ENCODE measurements at regions of chr1 and their contacts with region 1.

Region 1: DNA sequence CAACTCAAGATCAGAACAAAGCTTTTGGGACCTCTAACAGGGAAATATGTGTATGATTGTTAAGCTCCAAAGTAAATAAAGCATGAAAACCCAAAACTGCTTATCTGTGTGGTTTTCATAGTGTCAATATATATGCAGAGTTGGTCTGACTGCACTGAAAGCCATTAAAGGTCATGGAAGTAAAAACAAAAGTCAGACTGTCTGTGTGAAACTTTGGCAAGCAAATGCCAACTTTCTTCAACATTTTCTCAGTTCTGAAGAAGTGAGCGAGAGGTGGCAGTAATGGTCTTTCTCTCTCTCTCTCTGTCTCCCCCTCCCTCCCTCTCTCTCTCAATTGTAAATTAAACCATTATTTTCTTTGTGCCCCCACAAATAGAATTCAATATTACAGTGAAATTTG is 100.1 kb upstream of the S1PR1 start:
- DNase-seq: peak; percentile 79
- H3K4me3 Mint-ChIP-seq: peak overlapping the region; percentile 67
- H3K27ac Mint-ChIP-seq: peak overlapping the region; percentile 80
- H3K4me1 Mint-ChIP-seq: peaks cover 65% of the 10 kb centered on the region
- H3K27me3 Mint-ChIP-seq: peaks cover 1% of the 10 kb centered on the region

Region 2: GRCh38 chr1:100928128-100928527 is 208.6 kb before region 1 on chr1:
- intact Hi-C with region 1: loop called (anchors 2 kb)
- DNase-seq: peak; percentile 66
- H3K4me3 Mint-ChIP-seq: no peak overlapping the region
- H3K27ac Mint-ChIP-seq: no peak overlapping the region
- H3K4me1 Mint-ChIP-seq: peaks cover 44% of the 10 kb centered on the region
- H3K27me3 Mint-ChIP-seq: no peaks in the 10 kb centered on the region

Region 3: GRCh38 chr1:101025657-101026504 is 110.9 kb before region 1 on chr1 and contains the start of gene DPH5:
- intact Hi-C with region 1: loop called (anchors 2 kb)
- DNase-seq: peak; percentile 97
- H3K4me3 Mint-ChIP-seq: peak within 1 kb of the TSS; percentile 100
- H3K27ac Mint-ChIP-seq: peak within 1 kb of the TSS; percentile 98
- H3K4me1 Mint-ChIP-seq: peaks cover 42% of the 10 kb centered on the region
- H3K27me3 Mint-ChIP-seq: no peaks in the 10 kb centered on the region
- total RNA-seq, gene DPH5: 37.5 and 41.0 TPM in 2 replicates

Region 4: DNA sequence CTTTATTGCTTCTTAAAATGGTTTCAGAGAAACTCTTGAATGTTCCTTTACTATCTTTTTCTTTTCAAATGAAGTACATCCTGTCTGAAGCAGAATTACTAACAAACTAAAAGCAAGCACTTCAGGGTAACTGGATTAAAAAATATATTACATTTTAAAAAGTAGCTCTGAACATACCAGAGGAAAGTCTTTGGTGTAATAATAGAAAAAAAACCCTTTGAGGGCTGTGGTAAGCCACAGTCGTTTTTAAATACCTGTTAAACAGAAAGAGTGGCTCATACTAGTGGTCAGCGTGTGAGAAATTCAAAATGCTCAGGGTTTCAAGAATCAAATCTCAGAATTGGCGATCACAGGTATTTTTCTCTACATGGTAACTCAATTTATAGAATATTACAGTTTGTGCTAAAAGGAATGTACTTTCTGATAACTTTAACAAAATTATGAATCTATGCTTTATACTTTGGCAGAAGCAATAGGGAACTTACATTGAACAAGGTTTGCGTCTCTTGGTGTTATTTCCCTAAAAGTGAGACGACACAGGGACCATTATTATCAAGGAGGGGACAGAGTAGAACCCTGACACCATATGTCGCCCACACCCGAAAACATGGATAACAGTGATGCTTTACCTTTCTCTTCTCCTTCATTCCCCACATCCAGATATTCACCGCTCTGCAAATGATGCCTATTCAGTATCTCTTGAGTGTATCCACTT is 14.1 kb before region 1 on chr1:
- intact Hi-C with region 1: loop called (anchors 2 kb)
- DNase-seq: no peak
- H3K4me3 Mint-ChIP-seq: peak overlapping the region; percentile 41
- H3K27ac Mint-ChIP-seq: peak overlapping the region; percentile 52
- H3K4me1 Mint-ChIP-seq: peaks cover 34% of the 10 kb centered on the region
- H3K27me3 Mint-ChIP-seq: no peaks in the 10 kb centered on the region

Region 5: DNA sequence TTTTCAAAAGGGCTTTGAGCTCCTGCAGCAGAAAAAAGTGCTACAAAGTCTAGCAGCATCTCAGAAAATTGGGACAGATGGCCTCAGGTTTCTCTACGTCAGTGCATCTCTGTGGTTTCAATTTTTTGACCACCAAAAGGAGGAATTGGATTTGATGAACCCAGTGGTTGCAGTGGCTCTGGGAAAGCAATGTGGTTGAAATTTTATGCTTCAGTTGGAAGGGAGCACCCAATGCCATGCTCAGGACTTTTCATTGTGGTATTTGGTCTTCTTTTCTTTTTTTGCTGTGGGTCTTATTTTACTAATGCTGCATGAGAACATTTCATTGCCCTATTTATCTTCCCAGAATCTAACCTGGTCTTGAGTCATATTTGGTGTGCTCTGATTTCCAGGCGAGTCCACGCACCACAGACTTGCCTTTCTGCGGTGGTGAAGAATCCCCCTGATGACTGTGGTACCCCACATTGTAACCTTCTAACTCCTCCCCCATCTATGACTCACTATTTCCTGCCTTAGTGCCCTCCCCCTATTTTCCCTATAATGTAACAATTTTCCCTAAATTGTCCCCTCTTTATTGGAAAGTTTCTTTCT is 156.8 kb after region 1 on chr1:
- intact Hi-C with region 1: loop called (anchors 1 kb)
- DNase-seq: peak; percentile 76
- H3K4me3 Mint-ChIP-seq: peak overlapping the region; percentile 20
- H3K27ac Mint-ChIP-seq: peak overlapping the region; percentile 77
- H3K4me1 Mint-ChIP-seq: peaks cover 53% of the 10 kb centered on the region
- H3K27me3 Mint-ChIP-seq: peaks cover 24% of the 10 kb centered on the region